ENCODE measurements at regions of chr15 and their contacts with region 1.

Region 1: GRCh38 chr15:90412356-90413194 is 24.5 kb downstream of the IQGAP1 start:
- DNase-seq: peak in 1 of 2 donors; percentile 48
- ATAC-seq: peak; percentile 29 to 66 (median 38)
- H3K4me3 ChIP-seq: no peak overlapping the region
- H3K4me3 Mint-ChIP-seq: peak overlapping the region; percentile 83
- H3K27ac ChIP-seq: peak overlapping the region; percentile 73
- H3K27ac Mint-ChIP-seq: peak overlapping the region; percentile 89 to 93
- H3K4me1 ChIP-seq: peaks cover 45% of the 10 kb centered on the region
- H3K4me1 Mint-ChIP-seq: peaks cover 86 to 91% of the 10 kb centered on the region in 2 donors
- H3K27me3 ChIP-seq: no peaks in the 10 kb centered on the region
- H3K27me3 Mint-ChIP-seq: no peaks in the 10 kb centered on the region
- CTCF ChIP-seq: no peak

Region 2: DNA sequence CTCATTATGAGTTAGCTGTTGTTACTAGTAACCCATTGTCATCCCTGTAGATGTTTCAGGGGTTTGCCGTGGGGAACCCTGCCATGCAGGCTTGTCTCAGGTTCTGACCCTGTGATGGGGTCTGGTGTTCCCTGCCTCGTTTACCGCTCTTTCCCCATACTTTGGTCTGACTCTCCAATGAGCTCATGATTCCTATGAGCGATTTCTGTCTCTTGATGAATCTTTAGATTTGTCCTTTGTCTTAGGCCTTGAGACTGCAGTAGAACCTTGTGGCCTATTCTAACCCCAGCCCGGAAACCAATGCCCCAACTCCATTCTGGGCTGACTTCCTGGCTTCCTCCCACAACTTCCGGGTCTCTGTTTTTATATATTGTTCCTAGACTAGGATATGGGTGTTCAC is 35.8 kb before region 1 on chr15:
- intact Hi-C with region 1: loop called (anchors 2 kb)
- DNase-seq: peak; percentile 54 to 85
- ATAC-seq: peak; percentile 87 to 96 (median 90)
- H3K4me3 ChIP-seq: no peak overlapping the region
- H3K4me3 Mint-ChIP-seq: peak overlapping the region; percentile 87
- H3K27ac ChIP-seq: peak overlapping the region; percentile 72
- H3K27ac Mint-ChIP-seq: peak overlapping the region; percentile 89 to 93
- H3K4me1 ChIP-seq: peaks cover 40% of the 10 kb centered on the region
- H3K4me1 Mint-ChIP-seq: peaks cover 49 to 52% of the 10 kb centered on the region in 2 donors
- H3K27me3 ChIP-seq: no peaks in the 10 kb centered on the region
- H3K27me3 Mint-ChIP-seq: no peaks in the 10 kb centered on the region
- CTCF ChIP-seq: no peak

Region 3: GRCh38 chr15:90387537-90388461 is 24.8 kb before region 1 on chr15 and contains the start of gene IQGAP1:
- intact Hi-C with region 1: loop called (anchors 2 kb)
- DNase-seq: peak; percentile 84 to 97
- ATAC-seq: peak; percentile 87 to 99 (median 89)
- H3K4me3 ChIP-seq: peak within 1 kb of the TSS; percentile 97
- H3K4me3 Mint-ChIP-seq: peak within 1 kb of the TSS; percentile 96
- H3K27ac ChIP-seq: peak within 1 kb of the TSS; percentile 97
- H3K27ac Mint-ChIP-seq: peak within 1 kb of the TSS; percentile 53 to 96
- H3K4me1 ChIP-seq: peaks cover 35% of the 10 kb centered on the region
- H3K4me1 Mint-ChIP-seq: peaks cover 48 to 55% of the 10 kb centered on the region in 2 donors
- H3K27me3 ChIP-seq: no peaks in the 10 kb centered on the region
- H3K27me3 Mint-ChIP-seq: no peaks in the 10 kb centered on the region
- CTCF ChIP-seq: no peak
- total RNA-seq, gene IQGAP1: 431 to 493 (median 446) TPM

Region 4: GRCh38 chr15:90565866-90566265 is 153.3 kb after region 1 on chr15:
- intact Hi-C with region 1: loop called (anchors 5 kb)
- DNase-seq: no peak
- ATAC-seq: no peak
- H3K4me3 ChIP-seq: no peak overlapping the region
- H3K4me3 Mint-ChIP-seq: peak overlapping the region; percentile 81
- H3K27ac ChIP-seq: peak overlapping the region; percentile 38
- H3K27ac Mint-ChIP-seq: peak overlapping the region; percentile 91 to 94
- H3K4me1 ChIP-seq: peaks cover 72% of the 10 kb centered on the region
- H3K4me1 Mint-ChIP-seq: peaks cover 83 to 85% of the 10 kb centered on the region in 2 donors
- H3K27me3 ChIP-seq: no peaks in the 10 kb centered on the region
- H3K27me3 Mint-ChIP-seq: no peaks in the 10 kb centered on the region
- CTCF ChIP-seq: no peak

Region 5: DNA sequence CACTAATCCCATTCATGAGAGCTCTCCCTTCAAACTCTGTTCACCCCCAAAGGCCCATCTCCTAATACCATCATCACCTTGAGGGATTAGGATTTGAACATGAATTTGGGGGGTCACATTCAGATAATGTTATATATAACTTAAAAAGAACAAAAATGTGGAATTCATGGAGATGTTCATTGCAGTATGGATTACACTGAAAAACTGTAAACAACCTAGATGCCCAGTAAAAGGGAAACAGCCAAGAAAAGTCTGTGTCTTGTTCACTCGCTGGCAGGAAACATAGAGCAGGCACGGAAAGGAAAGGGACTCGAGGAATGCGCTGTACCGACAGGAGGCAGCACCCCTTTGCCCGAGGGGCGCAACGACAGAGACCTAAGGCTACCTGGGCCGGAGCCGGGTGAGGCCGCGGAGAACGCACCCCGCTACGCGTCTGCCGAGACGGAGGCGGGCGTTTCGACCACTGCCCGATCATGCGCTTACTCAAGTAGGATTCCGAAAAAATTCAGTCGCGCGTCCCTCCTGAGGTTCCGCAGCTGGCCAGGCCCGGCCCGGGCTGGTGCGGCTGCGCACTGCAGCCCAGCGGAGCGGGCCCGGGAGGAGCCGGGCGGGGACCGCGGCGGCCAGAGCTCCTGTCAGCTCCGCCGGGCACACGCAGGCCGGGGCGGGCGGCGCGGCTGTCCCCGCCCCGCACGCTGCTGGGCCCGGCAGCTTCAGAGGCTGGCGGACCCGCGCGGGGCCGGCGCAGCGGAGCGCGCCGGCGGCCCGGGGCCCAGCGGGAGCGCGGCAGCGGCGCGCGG is 489.7 kb after region 1 on chr15:
- intact Hi-C with region 1: no loop called
- DNase-seq: peak; percentile 62 to 87
- ATAC-seq: peak; percentile 72 to 85 (median 81)
- H3K4me3 ChIP-seq: peak overlapping the region; percentile 75
- H3K4me3 Mint-ChIP-seq: peak overlapping the region; percentile 93
- H3K27ac ChIP-seq: peak overlapping the region; percentile 74
- H3K27ac Mint-ChIP-seq: peak overlapping the region; percentile 87 to 88
- H3K4me1 ChIP-seq: peaks cover 17% of the 10 kb centered on the region
- H3K4me1 Mint-ChIP-seq: peaks cover 22 to 28% of the 10 kb centered on the region in 2 donors
- H3K27me3 ChIP-seq: no peaks in the 10 kb centered on the region
- H3K27me3 Mint-ChIP-seq: no peaks in the 10 kb centered on the region
- CTCF ChIP-seq: peak; percentile 71